CD4-positive, alpha-beta memory T cell (primary cell): ENCODE measurements at regions of chr14 and their contacts with region 1.

Region 1: DNA sequence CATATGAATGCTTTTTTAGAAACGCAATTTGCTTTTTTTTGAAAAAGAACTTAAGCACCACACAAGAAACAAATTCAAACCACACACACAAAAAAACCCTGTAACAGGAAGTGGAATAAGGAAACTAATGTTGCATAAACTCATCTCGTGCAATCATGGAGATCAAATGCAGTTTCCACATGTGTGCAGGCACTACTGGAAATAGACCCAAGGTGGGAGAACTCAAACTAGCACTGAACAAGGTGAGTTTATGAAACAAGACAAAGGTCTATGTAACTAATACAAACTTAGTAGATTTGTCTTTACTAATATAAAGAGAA is 17.5 kb downstream of the NIN start:
- DNase-seq: peak; percentile 50 to 64 (median 58)
- H3K4me3 ChIP-seq: no peak overlapping the region
- H3K4me3 Mint-ChIP-seq: peak overlapping the region; percentile 77 to 92 (median 86)
- H3K27ac ChIP-seq: no peak overlapping the region
- H3K27ac Mint-ChIP-seq: peak overlapping the region; percentile 70 to 95 (median 86)
- H3K4me1 ChIP-seq: peaks cover 37% of the 10 kb centered on the region
- H3K4me1 Mint-ChIP-seq: peaks cover 40 to 69% (median 53%) of the 10 kb centered on the region in 4 donors
- H3K27me3 ChIP-seq: no peaks in the 10 kb centered on the region
- H3K27me3 Mint-ChIP-seq: no peaks in the 10 kb centered on the region

Region 2: GRCh38 chr14:50785457-50786063 is 27.9 kb before region 1 on chr14:
- CTCF ChIA-PET with region 1: no interaction called
- POLR2A ChIA-PET with region 1: interaction called, 8 read pairs
- intact Hi-C with region 1: loop called (anchors 2 kb)
- DNase-seq: peak in 1 of 5 donors; percentile 22
- H3K4me3 ChIP-seq: no peak overlapping the region
- H3K4me3 Mint-ChIP-seq: peak overlapping the region; percentile 56 to 91 (median 74)
- H3K27ac ChIP-seq: peak overlapping the region; percentile 46
- H3K27ac Mint-ChIP-seq: peak overlapping the region; percentile 82 to 96 (median 88)
- H3K4me1 ChIP-seq: peaks cover 69% of the 10 kb centered on the region
- H3K4me1 Mint-ChIP-seq: peaks cover 52 to 89% (median 72%) of the 10 kb centered on the region in 4 donors
- H3K27me3 ChIP-seq: no peaks in the 10 kb centered on the region
- H3K27me3 Mint-ChIP-seq: no peaks in the 10 kb centered on the region

Region 3: DNA sequence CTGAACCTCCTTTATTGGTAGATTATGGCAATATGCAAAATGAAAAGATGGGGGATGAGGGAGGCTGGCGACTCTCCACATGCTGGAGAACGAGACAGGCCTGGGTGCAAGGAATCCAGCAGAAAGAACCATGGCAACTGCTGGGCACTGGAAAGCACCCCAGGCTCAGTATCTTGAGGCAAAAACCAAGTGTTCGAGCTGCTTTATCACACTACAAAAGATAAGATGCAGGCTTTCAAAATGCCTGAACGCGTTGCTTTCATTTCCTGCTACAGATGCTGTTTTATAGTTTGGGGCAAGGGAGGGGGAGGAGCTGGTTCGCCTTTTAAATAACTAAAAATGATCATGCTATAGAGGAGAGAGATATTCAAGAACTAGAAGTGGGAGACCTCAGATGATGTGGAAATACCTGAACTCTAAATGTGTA is 21.4 kb before region 1 on chr14:
- CTCF ChIA-PET with region 1: interaction called, 13 read pairs
- POLR2A ChIA-PET with region 1: interaction called, 8 read pairs
- intact Hi-C with region 1: no loop called
- DNase-seq: peak in 2 of 5 donors; percentile 17 to 26
- H3K4me3 ChIP-seq: peak overlapping the region in 1 of 2 donors; percentile 48
- H3K4me3 Mint-ChIP-seq: peak overlapping the region; percentile 4 to 81 (median 74)
- H3K27ac ChIP-seq: peak overlapping the region; percentile 24
- H3K27ac Mint-ChIP-seq: peak overlapping the region; percentile 64 to 92 (median 88)
- H3K4me1 ChIP-seq: peaks cover 60% of the 10 kb centered on the region
- H3K4me1 Mint-ChIP-seq: peaks cover 56 to 86% (median 70%) of the 10 kb centered on the region in 4 donors
- H3K27me3 ChIP-seq: no peaks in the 10 kb centered on the region
- H3K27me3 Mint-ChIP-seq: no peaks in the 10 kb centered on the region